HEK293 (cell line): ENCODE measurements at regions of chr10 and their contacts with region 1.

Region 1: DNA sequence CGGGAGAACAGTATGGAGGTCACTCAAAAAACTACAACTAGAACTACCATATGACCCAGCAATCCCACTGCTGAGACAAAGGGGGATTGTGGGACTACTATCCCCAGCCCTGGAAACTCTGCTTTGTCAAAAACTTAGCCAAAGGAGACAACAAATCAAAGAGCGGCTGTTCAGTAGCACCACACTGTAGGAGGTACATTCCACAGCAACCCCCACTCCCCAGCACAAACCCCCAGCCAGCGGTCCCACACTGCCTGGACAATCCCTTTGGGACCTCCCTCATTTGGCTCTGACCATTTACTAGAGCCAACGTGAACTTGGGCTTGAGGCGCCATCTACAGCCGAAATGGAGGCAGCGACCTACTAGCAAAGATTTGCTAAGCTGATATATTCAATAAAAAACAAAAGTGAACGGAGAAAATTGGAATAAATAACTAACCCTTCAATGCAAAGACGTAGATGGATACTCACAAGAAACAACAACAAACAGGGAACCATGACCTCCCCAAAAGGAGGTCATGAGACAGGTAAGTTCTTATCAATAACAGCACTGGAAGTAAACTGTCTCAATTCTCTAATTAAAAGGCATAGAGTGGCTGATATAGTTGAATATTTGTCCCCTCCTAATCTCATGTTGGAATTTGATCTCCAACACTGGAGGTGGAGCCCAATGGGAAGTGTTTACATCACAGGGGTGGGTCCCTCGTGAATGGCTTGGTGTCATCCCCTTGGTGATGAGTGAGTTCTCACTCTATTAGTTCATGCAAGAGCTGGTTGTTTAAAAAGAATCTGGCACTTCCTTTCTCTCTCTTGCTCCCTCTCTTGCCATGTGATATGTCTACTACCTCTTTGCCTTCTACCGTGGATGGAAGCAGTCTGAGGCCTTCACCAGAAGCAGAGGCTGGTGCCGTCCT is 119.0 kb upstream of the KCNMA1 start:
- H3K4me3 ChIP-seq: no peak overlapping the region
- H3K27ac ChIP-seq: no peak overlapping the region
- H3K4me1 ChIP-seq: no peaks in the 10 kb centered on the region
- CTCF ChIP-seq: peak; percentile 83

Region 2: GRCh38 chr10:77716482-77717317 is 39.9 kb before region 1 on chr10:
- CTCF ChIA-PET with region 1: interaction called, 44 read pairs
- POLR2A ChIA-PET with region 1: no interaction called
- H3K4me3 ChIP-seq: no peak overlapping the region
- H3K27ac ChIP-seq: no peak overlapping the region
- H3K4me1 ChIP-seq: no peaks in the 10 kb centered on the region
- CTCF ChIP-seq: no peak

Region 3: GRCh38 chr10:77721815-77722214 is 34.8 kb before region 1 on chr10:
- CTCF ChIA-PET with region 1: interaction called, 44 read pairs
- POLR2A ChIA-PET with region 1: no interaction called
- H3K4me3 ChIP-seq: no peak overlapping the region
- H3K27ac ChIP-seq: no peak overlapping the region
- H3K4me1 ChIP-seq: no peaks in the 10 kb centered on the region
- CTCF ChIP-seq: no peak

Region 4: DNA sequence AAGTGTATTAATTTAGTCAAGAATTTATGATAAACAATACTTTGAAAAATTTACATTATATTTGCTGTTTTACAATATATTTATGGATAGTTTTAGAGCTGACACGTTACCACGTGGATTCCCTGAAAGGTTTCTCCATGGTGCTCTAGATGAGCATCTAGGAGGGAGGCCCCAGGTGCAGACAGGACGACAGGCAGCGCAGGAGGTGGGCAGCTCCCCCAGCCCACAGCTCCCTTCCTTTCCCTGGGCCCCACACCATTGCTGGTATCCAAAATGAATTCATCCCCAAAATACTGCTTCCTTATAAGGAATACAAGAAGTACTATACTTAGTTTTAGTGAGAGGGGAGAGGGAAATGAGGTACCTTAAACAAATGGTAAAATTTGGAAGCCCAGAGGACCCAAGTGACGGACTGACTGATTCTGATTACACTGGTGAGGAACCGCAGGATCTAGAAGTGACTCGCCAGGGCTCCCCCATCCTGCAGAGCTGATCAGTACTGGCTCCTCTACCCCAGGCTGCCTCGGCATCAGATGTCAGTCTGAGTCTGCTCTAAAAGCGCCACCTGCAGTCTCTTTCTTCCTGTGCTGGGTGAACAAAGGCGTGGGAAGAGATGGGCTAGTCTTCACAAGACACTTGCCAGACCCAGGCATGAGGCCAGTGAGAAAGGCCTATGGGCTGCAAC is 80.8 kb after region 1 on chr10:
- CTCF ChIA-PET with region 1: no interaction called
- POLR2A ChIA-PET with region 1: no interaction called
- H3K4me3 ChIP-seq: no peak overlapping the region
- H3K27ac ChIP-seq: no peak overlapping the region
- H3K4me1 ChIP-seq: peaks cover 5% of the 10 kb centered on the region; the same call in 1 of the 2 replicates
- CTCF ChIP-seq: peak; percentile 60

Region 5: GRCh38 chr10:78520737-78521430 is 764.3 kb after region 1 on chr10:
- CTCF ChIA-PET with region 1: no interaction called
- POLR2A ChIA-PET with region 1: no interaction called
- H3K4me3 ChIP-seq: no peak overlapping the region
- H3K27ac ChIP-seq: no peak overlapping the region
- H3K4me1 ChIP-seq: no peaks in the 10 kb centered on the region
- CTCF ChIP-seq: no peak